ENCODE measurements at regions of chr7 and their contacts with region 1.

Region 1: GRCh38 chr7:64618785-64619456 is 47.0 kb upstream of the ZNF107 start:
- ATAC-seq: peak in 4 of 8 experiments; percentile 17 to 90 (median 72)
- H3K4me3 ChIP-seq: no peak overlapping the region
- H3K27ac ChIP-seq: no peak overlapping the region
- H3K4me1 ChIP-seq: no peaks in the 10 kb centered on the region

Region 2: DNA sequence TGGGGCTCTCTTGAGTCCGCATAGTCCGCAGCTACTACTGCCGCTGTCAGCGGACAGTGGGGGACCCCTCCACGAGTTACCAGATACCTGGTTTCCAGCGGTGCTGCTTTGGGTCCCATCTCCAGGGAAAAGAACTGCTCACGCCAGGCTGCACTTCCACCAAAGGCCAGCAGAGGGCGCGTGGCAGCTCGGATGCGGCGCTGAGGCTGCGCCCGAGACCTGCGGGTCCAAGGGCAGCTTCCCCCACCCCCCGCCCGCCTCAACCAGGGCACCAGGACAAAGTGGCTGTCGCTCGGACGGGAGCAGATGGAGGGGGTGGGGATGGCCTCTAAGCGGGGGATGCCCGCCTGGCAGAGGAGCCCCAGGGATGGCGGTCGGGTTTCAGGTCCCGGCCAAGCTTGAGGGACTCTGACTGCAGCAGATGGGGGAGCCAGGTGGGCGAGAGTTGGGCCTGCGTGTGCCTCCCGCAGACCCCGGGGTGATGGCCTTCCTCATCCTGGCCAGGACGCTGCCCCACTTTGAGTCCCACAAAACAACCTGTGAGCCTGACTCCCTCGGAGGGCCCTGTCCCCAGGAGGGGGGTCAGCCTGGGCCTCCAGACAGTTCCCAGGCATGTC is 435.7 kb before region 1 on chr7:
- in situ Hi-C with region 1: loop called in 1 of 9 experiments (anchors 25 kb)
- ATAC-seq: no peak
- H3K4me3 ChIP-seq: no peak overlapping the region
- H3K27ac ChIP-seq: no peak overlapping the region
- H3K4me1 ChIP-seq: no peaks in the 10 kb centered on the region